ENCODE measurements at regions of chr3 and their contacts with region 1.

Region 1: DNA sequence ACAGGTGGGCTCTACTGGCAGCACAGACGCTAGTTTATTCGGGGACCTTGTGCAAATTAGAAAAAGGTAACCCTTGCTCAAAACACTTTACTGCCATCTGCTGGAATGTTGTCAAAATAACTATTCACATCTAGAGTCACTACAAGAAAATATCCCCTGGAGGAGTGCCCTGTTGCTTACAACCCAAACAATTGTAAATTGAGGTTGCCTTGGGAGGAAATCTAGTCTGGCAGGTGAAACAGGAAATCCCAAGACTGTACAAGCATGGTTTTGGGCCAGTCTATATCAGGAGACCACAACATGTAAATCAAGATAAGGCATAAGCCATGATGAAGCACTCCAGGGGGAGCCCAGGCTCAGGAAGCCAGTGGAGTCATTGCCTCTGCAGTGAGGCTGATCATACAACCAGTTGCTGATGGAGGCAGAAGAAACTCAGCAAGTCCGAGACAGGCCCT is 136.8 kb upstream of the ACP3 start:
- DNase-seq: peak; percentile 45
- ATAC-seq: peak; percentile 86
- H3K4me3 ChIP-seq: no peak overlapping the region
- H3K27ac ChIP-seq: no peak overlapping the region
- H3K4me1 ChIP-seq: no peaks in the 10 kb centered on the region
- H3K27me3 ChIP-seq: peaks cover 6% of the 10 kb centered on the region; the same call in 1 of the 2 replicates
- CTCF ChIP-seq: peak; percentile 82

Region 2: DNA sequence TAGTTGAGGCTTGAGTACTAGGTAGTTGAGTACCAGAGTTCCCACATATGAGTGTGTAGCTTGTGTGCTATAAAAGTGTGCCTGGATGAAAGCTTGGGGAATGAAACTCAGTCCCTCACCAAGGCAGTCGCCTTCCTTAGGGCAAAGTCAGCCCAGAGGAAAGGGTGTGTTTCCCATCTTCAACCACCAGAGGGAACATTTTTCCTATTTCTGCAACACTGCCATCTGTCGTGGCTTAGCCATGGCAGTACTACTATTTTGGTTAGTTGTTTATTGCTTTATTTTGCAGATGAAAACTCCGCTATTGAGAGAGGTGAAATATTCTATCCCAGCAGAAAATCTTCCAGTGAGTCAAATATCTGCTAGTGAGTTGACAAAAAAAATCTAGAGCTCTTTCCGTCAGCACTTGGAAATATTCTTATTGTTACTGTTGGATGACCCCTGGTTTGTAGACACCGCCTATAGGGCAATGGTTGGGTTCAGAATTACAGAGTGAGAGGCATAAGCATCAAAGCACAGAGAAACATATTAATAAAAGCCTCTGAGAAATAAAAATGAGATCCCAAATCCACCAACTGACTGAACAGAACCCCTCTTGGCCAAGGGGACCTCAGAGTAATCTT is 385.5 kb before region 1 on chr3:
- CTCF ChIA-PET with region 1: no interaction called
- POLR2A ChIA-PET with region 1: no interaction called
- in situ Hi-C with region 1: no loop called
- intact Hi-C with region 1: loop called (anchors 10 kb)
- DNase-seq: peak; percentile 39
- ATAC-seq: peak; percentile 97
- H3K4me3 ChIP-seq: no peak overlapping the region
- H3K27ac ChIP-seq: no peak overlapping the region
- H3K4me1 ChIP-seq: no peaks in the 10 kb centered on the region
- H3K27me3 ChIP-seq: 0 out of 2 replicates have a peak, but pooled peaks cover 3% of the 10 kb centered on the region
- CTCF ChIP-seq: peak; percentile 86

Region 3: DNA sequence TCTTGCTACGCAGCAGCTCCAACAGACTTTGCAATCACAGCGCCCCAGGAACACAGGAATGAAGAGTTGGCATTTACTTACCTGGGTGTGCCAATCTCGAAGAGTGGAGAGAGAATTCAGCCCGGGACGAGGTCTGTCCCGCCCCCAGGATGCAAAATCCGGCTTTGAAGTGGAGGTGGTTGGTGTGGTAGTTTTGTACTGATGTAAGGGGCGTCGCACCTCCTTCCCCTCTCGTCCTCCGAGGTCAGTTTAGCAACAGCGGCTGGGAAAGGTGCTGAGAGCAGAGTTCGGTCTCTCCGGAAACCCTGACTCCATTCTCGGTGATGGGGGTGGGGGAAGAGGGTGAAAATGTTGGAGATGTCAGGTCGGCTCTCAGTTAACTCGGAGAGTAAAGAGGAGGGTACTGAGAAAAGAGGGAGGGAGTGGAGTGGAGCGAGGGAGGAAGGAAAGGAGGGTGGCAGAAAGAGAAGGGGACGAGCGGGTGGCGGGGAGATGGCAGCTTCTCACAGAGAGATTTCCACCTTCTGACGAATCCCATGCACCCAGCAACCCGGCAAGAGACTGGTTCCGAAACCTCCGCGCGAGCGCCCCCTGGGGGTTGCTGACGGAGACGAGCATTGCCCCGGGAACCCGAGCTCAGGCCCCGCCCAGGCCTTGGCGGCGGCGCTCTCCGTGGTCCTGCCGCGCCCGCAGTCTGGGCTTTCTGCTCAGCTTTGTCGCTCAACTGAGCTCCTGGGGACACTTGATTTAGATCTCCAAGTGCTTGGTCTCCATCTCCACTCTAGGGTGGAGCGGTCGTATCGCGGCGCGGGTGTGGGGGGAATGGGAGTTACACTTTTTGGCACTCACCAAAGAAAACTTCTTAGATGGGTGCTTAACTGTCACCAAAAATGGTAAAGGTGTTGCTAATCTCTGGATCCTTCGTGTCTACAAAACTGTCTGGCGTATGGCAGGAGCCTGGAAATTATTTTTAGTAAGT is 145.6 kb before region 1 on chr3 and contains the start of gene CPNE4:
- CTCF ChIA-PET with region 1: interaction called, 5 read pairs
- POLR2A ChIA-PET with region 1: no interaction called
- in situ Hi-C with region 1: no loop called
- intact Hi-C with region 1: loop called (anchors 1 kb)
- DNase-seq: peak; percentile 20
- ATAC-seq: peak; percentile 97
- H3K4me3 ChIP-seq: peak within 1 kb of the TSS; percentile 25 to 49
- H3K27ac ChIP-seq: no peak within 1 kb of the TSS
- H3K4me1 ChIP-seq: 0 out of 2 replicates have a peak, but pooled peaks cover 4% of the 10 kb centered on the region
- H3K27me3 ChIP-seq: peaks cover 44% of the 10 kb centered on the region
- CTCF ChIP-seq: peak; percentile 91
- total RNA-seq, gene CPNE4: not detected

Region 4: GRCh38 chr3:132117642-132118041 is 62.7 kb before region 1 on chr3:
- CTCF ChIA-PET with region 1: no interaction called
- POLR2A ChIA-PET with region 1: no interaction called
- in situ Hi-C with region 1: no loop called
- intact Hi-C with region 1: no loop called
- DNase-seq: no peak
- ATAC-seq: no peak
- H3K4me3 ChIP-seq: no peak overlapping the region
- H3K27ac ChIP-seq: no peak overlapping the region
- H3K4me1 ChIP-seq: no peaks in the 10 kb centered on the region
- H3K27me3 ChIP-seq: no peaks in the 10 kb centered on the region
- CTCF ChIP-seq: no peak

Region 5: DNA sequence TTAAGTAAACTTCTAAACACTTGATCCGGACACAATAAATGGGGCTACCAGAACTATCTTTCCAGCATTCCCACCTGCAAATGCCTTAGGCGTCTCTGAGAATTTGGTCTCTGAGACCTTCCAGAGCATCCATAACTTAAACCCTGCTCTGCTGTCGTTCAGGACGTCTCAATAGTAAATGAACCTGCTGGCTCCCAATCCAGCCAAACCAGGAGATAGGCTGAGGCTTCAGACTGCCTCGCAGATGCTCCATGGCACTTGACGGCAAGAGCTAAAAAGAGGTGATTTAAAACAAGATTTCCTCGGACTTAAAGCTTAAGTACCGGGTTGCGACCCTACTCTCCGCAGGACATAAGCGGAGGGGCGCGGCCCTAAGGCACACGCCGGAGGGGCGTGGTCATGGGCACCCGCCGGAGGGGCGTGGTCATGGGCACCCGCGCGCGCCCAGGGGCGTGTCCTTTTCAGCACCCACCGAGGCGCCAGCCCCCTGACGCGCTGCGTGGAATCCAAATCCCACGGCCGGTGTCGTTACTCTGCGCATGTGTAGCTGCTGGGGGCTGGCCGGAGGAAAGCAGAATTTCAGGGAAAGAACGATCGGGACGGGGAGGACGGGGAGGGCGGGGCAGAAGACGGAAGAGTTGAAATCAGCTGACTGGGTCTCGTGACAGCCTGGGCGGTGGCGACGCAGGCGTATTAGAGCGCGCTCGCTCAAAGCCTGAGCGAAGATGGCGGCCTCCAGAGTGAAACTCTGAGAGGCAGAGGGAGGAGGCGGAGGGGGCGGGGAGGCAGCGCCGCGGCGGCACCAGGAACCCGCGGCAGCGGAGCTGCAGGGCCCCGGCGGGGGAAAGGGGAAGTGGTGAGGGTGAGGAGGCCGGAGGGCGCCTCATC is 236.7 kb after region 1 on chr3 and contains the start of gene DNAJC13:
- CTCF ChIA-PET with region 1: no interaction called
- POLR2A ChIA-PET with region 1: interaction called, 11 read pairs
- in situ Hi-C with region 1: no loop called
- intact Hi-C with region 1: no loop called
- DNase-seq: peak; percentile 73
- ATAC-seq: peak; percentile 98
- H3K4me3 ChIP-seq: peak within 1 kb of the TSS; percentile 90 to 99
- H3K27ac ChIP-seq: peak within 1 kb of the TSS; percentile 97
- H3K4me1 ChIP-seq: peaks cover 23% of the 10 kb centered on the region
- H3K27me3 ChIP-seq: peaks cover 3% of the 10 kb centered on the region; the same call in 1 of the 2 replicates
- CTCF ChIP-seq: no peak
- total RNA-seq, gene DNAJC13: 54.2 TPM